ENCODE measurements at regions of chr2 and their contacts with region 1.

Region 1: GRCh38 chr2:96174251-96175144 is 29.3 kb upstream of the DUSP2 start:
- DNase-seq: peak; percentile 83
- ATAC-seq: peak; percentile 90

Region 2: DNA sequence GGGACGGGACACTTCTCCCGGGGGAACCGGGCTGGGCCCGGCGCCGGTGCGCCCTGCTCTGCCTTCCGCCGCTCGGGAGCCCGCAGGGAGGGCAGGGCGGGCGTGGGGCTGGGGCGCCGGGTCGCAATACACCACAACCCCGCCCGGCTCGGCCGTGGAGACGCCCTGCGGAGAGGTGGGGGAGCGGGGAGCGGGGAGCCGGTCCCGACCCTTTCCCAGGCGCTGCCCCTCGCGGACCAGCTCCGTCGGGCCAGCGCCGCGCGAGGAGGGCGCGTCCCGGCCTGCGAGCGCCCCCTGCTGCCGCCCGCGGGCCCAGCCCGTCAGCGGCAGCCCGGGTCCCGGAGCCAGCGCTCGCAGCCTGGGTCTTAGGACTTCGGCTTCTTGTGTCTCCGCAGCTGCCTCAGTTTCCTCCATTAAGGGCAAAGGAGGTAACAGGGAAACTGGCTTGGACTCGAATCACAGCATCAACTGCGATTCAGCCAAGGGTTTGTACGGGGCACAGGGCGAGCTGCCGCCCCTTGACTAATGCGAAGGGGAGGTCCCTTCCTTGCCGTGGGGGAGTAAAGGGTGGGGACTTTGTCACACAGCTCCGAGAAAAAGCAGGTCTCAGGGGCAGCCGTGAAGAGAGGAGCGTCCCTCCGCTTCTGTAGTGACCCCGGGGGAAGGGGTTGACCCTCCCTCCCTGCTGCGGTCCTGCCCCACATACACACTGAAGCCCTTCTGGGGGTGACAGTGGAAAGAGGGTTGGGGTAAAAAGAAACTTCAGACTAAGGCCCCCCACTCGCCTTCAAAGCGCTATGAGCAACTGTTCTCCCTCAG is 57.4 kb before region 1 on chr2:
- intact Hi-C with region 1: no loop called
- DNase-seq: peak; percentile 81
- ATAC-seq: peak; percentile 90

Region 3: DNA sequence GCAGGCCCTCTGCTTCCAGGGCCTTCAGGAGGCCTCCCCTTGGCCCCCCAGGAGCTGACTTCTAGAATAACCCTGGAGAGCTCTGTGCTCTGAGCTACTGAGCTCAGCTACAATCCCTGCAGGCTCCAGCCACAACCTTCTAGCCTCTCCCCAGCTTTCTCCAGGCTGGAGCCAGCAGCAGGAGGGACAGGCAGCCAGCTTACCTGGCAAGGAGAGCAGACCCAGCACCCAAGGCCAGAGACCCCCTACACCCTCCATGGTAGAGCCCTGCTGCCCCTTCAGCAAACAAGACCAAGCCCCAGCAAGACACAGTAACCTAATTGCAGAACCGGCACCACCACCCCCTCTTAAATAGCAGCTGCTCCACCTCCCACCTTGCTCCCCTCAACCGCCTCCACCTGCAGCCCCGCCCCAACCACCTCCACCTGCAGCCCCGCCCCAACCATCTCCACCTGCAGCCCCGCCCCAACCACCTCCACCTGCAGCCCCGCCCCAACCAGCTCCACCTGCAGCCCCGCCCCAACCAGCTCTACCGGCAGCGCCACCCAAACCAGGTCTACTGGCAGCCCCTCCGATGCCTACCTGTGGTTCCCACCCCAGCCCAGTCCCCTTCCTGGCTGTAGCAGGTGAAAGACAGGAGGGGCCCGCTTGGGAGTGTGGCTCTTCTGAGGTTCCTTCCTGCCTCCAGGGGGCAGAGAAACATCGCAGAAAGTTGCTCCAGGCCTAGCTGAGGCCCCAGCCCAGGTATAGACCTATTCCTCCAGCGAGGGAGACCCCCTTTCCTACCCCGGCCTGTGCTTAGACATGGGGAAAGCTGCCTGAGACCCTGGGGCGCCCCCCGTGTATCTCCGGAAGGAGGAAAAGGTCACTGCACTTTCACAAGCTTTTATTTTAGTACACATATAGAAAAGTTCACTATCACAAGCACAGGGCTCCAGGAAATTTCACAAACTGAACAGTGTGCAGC is 36.0 kb before region 1 on chr2 and contains the start of gene ASTL:
- intact Hi-C with region 1: loop called (anchors 5 kb)
- DNase-seq: peak; percentile 44
- ATAC-seq: peak; percentile 76
- total RNA-seq, gene ASTL: not detected

Measured in left ventricle myocardium superior (tissue), 1 donor.